CD4-positive, alpha-beta memory T cell (primary cell): ENCODE measurements at regions of chr12 and their contacts with region 1.

Region 1: DNA sequence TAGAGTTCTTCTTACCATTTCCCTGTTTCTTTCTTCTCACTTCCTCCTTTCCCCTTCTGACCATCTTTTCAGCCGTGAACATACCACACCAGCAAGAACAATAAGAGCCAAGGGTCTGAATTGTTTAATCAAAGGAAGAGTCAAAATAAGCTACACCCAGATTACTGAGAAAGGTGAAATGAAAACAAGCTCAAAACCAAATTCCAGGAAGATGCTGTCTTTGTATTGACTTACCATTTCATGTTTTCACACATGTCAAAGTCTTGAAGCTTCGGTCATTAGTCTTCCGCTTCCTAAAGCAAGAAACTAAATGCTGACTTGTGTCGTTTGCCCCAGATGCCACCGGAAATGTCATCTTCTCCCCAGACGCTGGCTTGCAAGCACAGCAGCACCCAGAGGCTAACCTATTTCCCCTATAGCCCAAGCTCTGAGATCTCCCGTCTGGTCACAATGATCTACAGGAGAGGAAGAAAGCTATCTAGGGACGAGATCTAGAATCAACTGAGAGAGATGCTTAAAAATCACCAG is 136.5 kb upstream of the AMIGO2 start:
- DNase-seq: peak; percentile 71 to 87 (median 78)
- H3K4me3 ChIP-seq: peak overlapping the region; percentile 70 to 73
- H3K4me3 Mint-ChIP-seq: peak overlapping the region; percentile 92 to 99 (median 96)
- H3K27ac ChIP-seq: peak overlapping the region; percentile 65
- H3K27ac Mint-ChIP-seq: peak overlapping the region; percentile 92 to 97 (median 94)
- H3K4me1 ChIP-seq: peaks cover 32% of the 10 kb centered on the region
- H3K4me1 Mint-ChIP-seq: peaks cover 14 to 73% (median 27%) of the 10 kb centered on the region in 4 donors
- H3K27me3 ChIP-seq: no peaks in the 10 kb centered on the region
- H3K27me3 Mint-ChIP-seq: no peaks in the 10 kb centered on the region

Region 2: DNA sequence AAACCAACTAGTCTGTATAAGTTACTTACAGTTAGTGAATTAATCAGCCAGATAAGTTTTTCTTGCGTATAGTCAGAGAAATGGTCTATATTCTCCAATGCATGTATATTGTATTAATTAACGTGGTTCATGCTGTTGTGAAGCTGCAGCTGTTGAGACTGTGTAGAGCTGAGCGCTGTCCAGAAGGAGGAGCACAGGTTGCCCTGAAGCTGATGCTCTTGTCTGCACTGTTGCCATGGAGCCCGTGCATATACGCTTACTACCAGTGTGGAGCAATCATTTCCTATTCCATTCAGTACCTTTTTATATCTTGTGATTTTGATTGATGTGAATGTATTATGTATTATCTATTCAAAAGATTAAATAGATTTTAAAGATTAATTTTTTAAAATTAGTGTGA is 1561.0 kb before region 1 on chr12:
- CTCF ChIA-PET with region 1: no interaction called
- POLR2A ChIA-PET with region 1: no interaction called
- intact Hi-C with region 1: no loop called
- DNase-seq: peak; percentile 49 to 81 (median 70)
- H3K4me3 ChIP-seq: no peak overlapping the region
- H3K4me3 Mint-ChIP-seq: no peak overlapping the region
- H3K27ac ChIP-seq: no peak overlapping the region
- H3K27ac Mint-ChIP-seq: no peak overlapping the region
- H3K4me1 ChIP-seq: no peaks in the 10 kb centered on the region
- H3K4me1 Mint-ChIP-seq: peaks cover 0 to 8% (median 4%) of the 10 kb centered on the region in 4 donors
- H3K27me3 ChIP-seq: no peaks in the 10 kb centered on the region
- H3K27me3 Mint-ChIP-seq: peaks cover 8 to 9% of the 10 kb centered on the region in 2 donors

Region 3: GRCh38 chr12:46217541-46218321 is 998.5 kb before region 1 on chr12:
- CTCF ChIA-PET with region 1: no interaction called
- POLR2A ChIA-PET with region 1: interaction called, 3 read pairs
- intact Hi-C with region 1: loop called (anchors 5 kb)
- DNase-seq: peak; percentile 76 to 85 (median 81)
- H3K4me3 ChIP-seq: peak overlapping the region; percentile 42 to 56
- H3K4me3 Mint-ChIP-seq: peak overlapping the region; percentile 78 to 90 (median 84)
- H3K27ac ChIP-seq: peak overlapping the region; percentile 87
- H3K27ac Mint-ChIP-seq: peak overlapping the region; percentile 96 to 100 (median 98)
- H3K4me1 ChIP-seq: peaks cover 99% of the 10 kb centered on the region
- H3K4me1 Mint-ChIP-seq: peaks cover 88 to 98% (median 93%) of the 10 kb centered on the region in 4 donors
- H3K27me3 ChIP-seq: no peaks in the 10 kb centered on the region
- H3K27me3 Mint-ChIP-seq: no peaks in the 10 kb centered on the region

Region 4: GRCh38 chr12:47032644-47033043 is 183.6 kb before region 1 on chr12:
- CTCF ChIA-PET with region 1: interaction called, 6 read pairs
- POLR2A ChIA-PET with region 1: interaction called, 3 read pairs
- intact Hi-C with region 1: loop called (anchors 2 kb)
- DNase-seq: peak; percentile 33 to 65 (median 56)
- H3K4me3 ChIP-seq: no peak overlapping the region
- H3K4me3 Mint-ChIP-seq: no peak overlapping the region
- H3K27ac ChIP-seq: no peak overlapping the region
- H3K27ac Mint-ChIP-seq: peak overlapping the region in 1 of 7 donors; percentile 1
- H3K4me1 ChIP-seq: peaks cover 10% of the 10 kb centered on the region
- H3K4me1 Mint-ChIP-seq: peaks cover 8 to 16% (median 10%) of the 10 kb centered on the region in 4 donors
- H3K27me3 ChIP-seq: no peaks in the 10 kb centered on the region
- H3K27me3 Mint-ChIP-seq: no peaks in the 10 kb centered on the region

Region 5: DNA sequence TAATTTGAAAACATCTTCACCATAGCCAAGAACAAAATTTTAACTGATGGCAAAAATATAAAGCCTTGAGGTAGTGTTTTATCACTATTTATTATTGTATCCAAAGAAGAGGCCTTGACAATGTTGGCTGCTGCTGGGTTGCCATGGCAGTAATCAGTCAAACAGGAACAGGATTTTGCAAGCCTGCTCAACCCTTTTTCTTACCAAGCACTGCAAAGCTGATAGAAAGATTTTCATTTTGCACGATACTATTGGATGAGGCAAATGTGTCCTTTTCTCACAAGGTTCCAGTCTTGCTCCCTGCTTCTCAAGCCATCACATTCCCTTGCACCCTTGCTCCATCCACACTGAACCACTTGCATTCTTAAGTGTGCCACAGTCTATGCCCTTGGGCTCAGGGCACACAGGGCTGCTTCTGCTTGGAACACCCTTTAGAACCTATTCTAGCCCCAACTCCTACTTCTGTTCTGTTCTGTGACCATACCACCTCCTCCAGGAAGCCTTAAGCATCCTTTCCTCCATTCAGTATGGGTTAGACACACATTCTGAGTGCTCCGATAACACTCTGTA is 60.0 kb before region 1 on chr12:
- CTCF ChIA-PET with region 1: no interaction called
- POLR2A ChIA-PET with region 1: interaction called, 3 read pairs
- intact Hi-C with region 1: loop called (anchors 5 kb)
- DNase-seq: peak in 4 of 5 donors; percentile 16 to 38 (median 24)
- H3K4me3 ChIP-seq: no peak overlapping the region
- H3K4me3 Mint-ChIP-seq: peak overlapping the region in 4 of 8 donors; percentile 9 to 60 (median 39)
- H3K27ac ChIP-seq: no peak overlapping the region
- H3K27ac Mint-ChIP-seq: peak overlapping the region; percentile 28 to 93 (median 73)
- H3K4me1 ChIP-seq: peaks cover 32% of the 10 kb centered on the region
- H3K4me1 Mint-ChIP-seq: peaks cover 31 to 49% (median 42%) of the 10 kb centered on the region in 4 donors
- H3K27me3 ChIP-seq: no peaks in the 10 kb centered on the region
- H3K27me3 Mint-ChIP-seq: no peaks in the 10 kb centered on the region

Region 6: DNA sequence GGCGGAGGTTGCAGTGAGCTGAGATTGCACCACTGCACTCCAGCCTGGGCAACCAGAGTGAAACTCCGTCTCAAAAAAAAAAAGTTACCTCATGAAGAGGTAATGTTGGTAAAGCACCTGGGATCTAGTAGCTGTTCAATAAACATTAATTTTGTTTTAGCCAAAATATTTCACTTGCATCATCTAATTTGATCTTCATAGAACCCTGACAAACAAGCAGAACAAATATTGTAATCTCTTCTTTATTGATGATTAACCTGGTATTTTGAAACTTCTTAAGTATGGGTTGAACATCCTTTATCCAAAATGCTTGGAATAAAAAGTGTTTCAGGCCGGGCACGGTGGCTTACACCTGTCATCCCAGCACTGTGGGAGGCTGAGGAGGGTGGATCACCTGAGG is 12.6 kb after region 1 on chr12:
- CTCF ChIA-PET with region 1: interaction called, 7 read pairs
- POLR2A ChIA-PET with region 1: interaction called, 16 read pairs
- intact Hi-C with region 1: no loop called
- DNase-seq: no peak
- H3K4me3 ChIP-seq: no peak overlapping the region
- H3K4me3 Mint-ChIP-seq: peak overlapping the region in 1 of 8 donors; percentile 7
- H3K27ac ChIP-seq: no peak overlapping the region
- H3K27ac Mint-ChIP-seq: peak overlapping the region in 3 of 7 donors; percentile 25 to 59 (median 37)
- H3K4me1 ChIP-seq: peaks cover 73% of the 10 kb centered on the region
- H3K4me1 Mint-ChIP-seq: peaks cover 42 to 79% (median 62%) of the 10 kb centered on the region in 4 donors
- H3K27me3 ChIP-seq: no peaks in the 10 kb centered on the region
- H3K27me3 Mint-ChIP-seq: no peaks in the 10 kb centered on the region

Region 7: DNA sequence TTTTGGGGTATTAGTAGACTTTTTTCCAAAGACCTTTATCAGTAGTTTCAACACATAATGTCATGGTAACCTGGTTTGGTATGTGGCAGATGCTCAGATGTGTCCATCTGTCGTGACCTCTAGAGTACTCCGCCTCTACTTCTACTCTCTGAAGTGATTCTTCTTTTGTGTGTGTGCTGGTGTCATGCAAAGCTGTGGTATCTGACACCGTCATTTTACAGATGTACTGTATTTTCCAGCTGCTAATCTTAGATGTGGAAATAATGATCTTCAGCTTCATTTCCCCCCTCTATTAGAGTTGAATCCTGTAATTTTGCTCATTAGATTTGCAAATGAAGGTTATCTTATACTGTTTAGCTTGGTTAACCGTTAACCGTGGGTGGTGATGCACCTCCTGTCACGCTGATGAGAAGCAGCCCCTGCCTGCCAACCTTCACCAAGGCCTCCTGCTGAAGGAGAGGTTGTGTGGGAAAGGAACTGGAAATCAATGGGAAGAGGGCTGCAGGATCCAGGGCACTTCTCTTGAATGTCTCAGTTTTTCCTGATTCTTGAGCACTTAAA is 86.0 kb after region 1 on chr12:
- CTCF ChIA-PET with region 1: interaction called, 25 read pairs
- POLR2A ChIA-PET with region 1: interaction called, 55 read pairs
- intact Hi-C with region 1: loop called (anchors 1 kb)
- DNase-seq: no peak
- H3K4me3 ChIP-seq: no peak overlapping the region
- H3K4me3 Mint-ChIP-seq: peak overlapping the region in 3 of 8 donors; percentile 34 to 46 (median 41)
- H3K27ac ChIP-seq: no peak overlapping the region
- H3K27ac Mint-ChIP-seq: peak overlapping the region in 4 of 7 donors; percentile 44 to 90 (median 76)
- H3K4me1 ChIP-seq: peaks cover 43% of the 10 kb centered on the region
- H3K4me1 Mint-ChIP-seq: peaks cover 39 to 64% (median 51%) of the 10 kb centered on the region in 4 donors
- H3K27me3 ChIP-seq: no peaks in the 10 kb centered on the region
- H3K27me3 Mint-ChIP-seq: no peaks in the 10 kb centered on the region

Region 8: GRCh38 chr12:47717443-47718193 is 501.4 kb after region 1 on chr12:
- CTCF ChIA-PET with region 1: no interaction called
- POLR2A ChIA-PET with region 1: no interaction called
- intact Hi-C with region 1: no loop called
- DNase-seq: peak; percentile 56 to 71 (median 62)
- H3K4me3 ChIP-seq: no peak overlapping the region
- H3K4me3 Mint-ChIP-seq: peak overlapping the region in 5 of 8 donors; percentile 24 to 70 (median 42)
- H3K27ac ChIP-seq: peak overlapping the region; percentile 2
- H3K27ac Mint-ChIP-seq: peak overlapping the region; percentile 71 to 93 (median 90)
- H3K4me1 ChIP-seq: peaks cover 18% of the 10 kb centered on the region
- H3K4me1 Mint-ChIP-seq: peaks cover 22 to 40% (median 33%) of the 10 kb centered on the region in 4 donors
- H3K27me3 ChIP-seq: no peaks in the 10 kb centered on the region
- H3K27me3 Mint-ChIP-seq: no peaks in the 10 kb centered on the region